Calu3 (cell line): ENCODE measurements at regions of chr1 and their contacts with region 1.

Region 1: GRCh38 chr1:98323906-98324358 is 337.6 kb upstream of the SNX7 start:
- DNase-seq: peak; percentile 82
- H3K4me3 Mint-ChIP-seq: peak overlapping the region; percentile 29
- H3K27ac Mint-ChIP-seq: peak overlapping the region; percentile 92
- H3K4me1 Mint-ChIP-seq: peaks cover 51% of the 10 kb centered on the region
- H3K27me3 Mint-ChIP-seq: no peaks in the 10 kb centered on the region
- CTCF ChIP-seq: no peak

Region 2: DNA sequence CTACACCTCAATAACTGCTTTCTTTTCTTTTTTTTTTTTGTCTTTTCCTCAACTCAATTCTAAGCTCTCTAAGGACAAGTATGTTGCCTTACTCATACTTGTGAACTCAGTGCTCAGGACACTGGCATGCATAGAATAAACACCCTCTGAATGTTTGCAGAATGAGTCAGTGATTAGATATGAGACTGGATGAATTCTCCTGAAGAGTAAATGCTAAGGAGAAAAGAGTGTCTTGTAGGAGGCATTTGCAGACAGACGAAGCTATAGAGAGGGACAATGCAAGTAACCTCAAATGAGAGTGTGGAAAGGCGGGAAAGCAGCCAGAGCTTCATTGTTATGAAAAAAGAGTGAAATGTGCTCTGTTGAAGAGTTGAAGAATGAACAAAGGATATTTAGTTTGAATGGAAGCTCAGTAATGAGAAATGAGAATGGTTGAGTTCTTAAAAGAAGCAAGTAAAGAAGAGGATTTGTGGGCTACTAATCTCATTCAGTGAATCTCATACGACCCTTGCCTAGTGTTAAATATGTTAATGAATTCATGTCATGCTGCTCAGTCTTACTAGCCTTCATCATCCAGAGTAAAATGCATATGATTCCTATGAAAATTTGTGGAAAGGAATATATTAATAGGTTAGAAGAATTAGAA is 237.0 kb before region 1 on chr1:
- CTCF ChIA-PET with region 1: no interaction called
- intact Hi-C with region 1: loop called (anchors 10 kb)
- DNase-seq: peak; percentile 17
- H3K4me3 Mint-ChIP-seq: peak overlapping the region; percentile 39
- H3K27ac Mint-ChIP-seq: peak overlapping the region; percentile 93
- H3K4me1 Mint-ChIP-seq: peaks cover 27% of the 10 kb centered on the region
- H3K27me3 Mint-ChIP-seq: no peaks in the 10 kb centered on the region
- CTCF ChIP-seq: no peak

Region 3: DNA sequence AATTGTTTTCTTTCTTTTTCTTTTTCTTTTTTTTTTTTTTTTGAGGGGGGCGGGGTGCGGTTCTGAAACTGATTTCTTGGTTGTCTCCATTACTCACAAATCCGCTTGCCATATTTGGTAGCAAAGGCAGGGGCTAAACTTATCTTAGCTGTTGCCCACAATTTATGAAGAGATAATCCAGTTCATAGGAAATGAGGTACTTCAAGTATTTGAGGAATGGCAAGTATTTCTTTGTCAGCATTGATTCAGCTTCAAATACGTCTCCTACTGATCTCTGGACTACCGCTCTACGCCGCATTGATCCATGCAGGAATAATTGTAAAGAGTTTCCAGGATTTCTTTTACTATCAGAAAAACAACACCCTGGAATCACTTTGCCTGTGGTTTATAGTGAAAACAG is 113.9 kb before region 1 on chr1:
- CTCF ChIA-PET with region 1: no interaction called
- intact Hi-C with region 1: loop called (anchors 1 kb)
- DNase-seq: peak; percentile 15
- H3K4me3 Mint-ChIP-seq: peak overlapping the region; percentile 52
- H3K27ac Mint-ChIP-seq: peak overlapping the region; percentile 75
- H3K4me1 Mint-ChIP-seq: peaks cover 26% of the 10 kb centered on the region
- H3K27me3 Mint-ChIP-seq: no peaks in the 10 kb centered on the region
- CTCF ChIP-seq: no peak

Region 4: GRCh38 chr1:98460136-98460535 is 136.2 kb after region 1 on chr1:
- CTCF ChIA-PET with region 1: no interaction called
- intact Hi-C with region 1: loop called (anchors 2 kb)
- DNase-seq: peak; percentile 0
- H3K4me3 Mint-ChIP-seq: no peak overlapping the region
- H3K27ac Mint-ChIP-seq: no peak overlapping the region
- H3K4me1 Mint-ChIP-seq: peaks cover 37% of the 10 kb centered on the region
- H3K27me3 Mint-ChIP-seq: no peaks in the 10 kb centered on the region
- CTCF ChIP-seq: no peak